ENCODE measurements at regions of chr1 and their contacts with region 1.

Region 1: GRCh38 chr1:222455188-222455879 is 92.6 kb downstream of the HHIPL2 start:
- DNase-seq: peak; percentile 97
- H3K4me3 Mint-ChIP-seq: peak overlapping the region; percentile 37
- H3K27ac Mint-ChIP-seq: peak overlapping the region; percentile 54
- H3K4me1 Mint-ChIP-seq: peaks cover 16% of the 10 kb centered on the region
- H3K27me3 Mint-ChIP-seq: no peaks in the 10 kb centered on the region
- CTCF ChIP-seq: peak; percentile 100

Region 2: GRCh38 chr1:221478050-221478949 is 977.0 kb before region 1 on chr1:
- CTCF ChIA-PET with region 1: interaction called, 163 read pairs
- POLR2A ChIA-PET with region 1: interaction called, 28 read pairs
- intact Hi-C with region 1: loop called (anchors 1 kb)
- DNase-seq: peak; percentile 96
- H3K4me3 Mint-ChIP-seq: no peak overlapping the region
- H3K27ac Mint-ChIP-seq: no peak overlapping the region
- H3K4me1 Mint-ChIP-seq: no peaks in the 10 kb centered on the region
- H3K27me3 Mint-ChIP-seq: no peaks in the 10 kb centered on the region
- CTCF ChIP-seq: peak; percentile 99

Region 3: DNA sequence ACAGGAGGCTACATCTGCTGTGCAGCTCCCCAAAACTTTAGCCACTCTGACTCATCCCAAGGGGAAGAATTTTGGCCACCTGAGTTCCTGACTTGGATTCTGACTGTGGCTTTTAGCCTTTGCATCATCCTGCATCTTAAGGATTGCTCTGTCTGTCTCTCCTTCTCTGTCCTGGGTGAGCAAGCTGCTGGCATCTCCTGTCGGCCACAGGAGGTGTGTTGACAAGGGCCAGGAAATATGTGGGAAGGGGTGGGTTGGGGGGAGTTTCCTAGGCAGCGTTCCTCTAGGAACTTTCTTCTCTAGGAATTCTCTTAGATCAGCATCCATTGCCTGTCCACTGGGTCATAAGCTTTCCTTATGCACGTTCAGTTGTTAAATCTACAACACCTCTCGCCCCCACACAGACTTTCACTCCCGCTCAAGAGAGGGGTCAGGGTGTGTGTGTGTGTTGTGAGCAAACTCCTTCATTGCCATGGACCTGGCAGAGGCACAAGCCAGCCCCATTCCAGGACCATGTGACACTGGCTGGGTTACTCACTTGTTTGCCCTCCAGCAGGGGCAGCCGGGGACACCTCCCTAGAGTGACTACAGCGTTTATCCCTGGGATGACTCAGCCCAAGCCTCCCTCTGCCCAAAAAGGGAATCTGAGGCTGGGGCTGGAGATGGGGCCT is 568.5 kb before region 1 on chr1:
- CTCF ChIA-PET with region 1: interaction called, 26 read pairs
- POLR2A ChIA-PET with region 1: interaction called, 13 read pairs
- intact Hi-C with region 1: loop called (anchors 2 kb)
- DNase-seq: peak; percentile 99
- H3K4me3 Mint-ChIP-seq: peak overlapping the region; percentile 55
- H3K27ac Mint-ChIP-seq: peak overlapping the region; percentile 85
- H3K4me1 Mint-ChIP-seq: peaks cover 60% of the 10 kb centered on the region
- H3K27me3 Mint-ChIP-seq: no peaks in the 10 kb centered on the region
- CTCF ChIP-seq: peak; percentile 11

Region 4: GRCh38 chr1:222124602-222125001 is 330.7 kb before region 1 on chr1:
- CTCF ChIA-PET with region 1: interaction called, 81 read pairs
- POLR2A ChIA-PET with region 1: interaction called, 4 read pairs
- intact Hi-C with region 1: loop called (anchors 1 kb)
- DNase-seq: peak; percentile 64
- H3K4me3 Mint-ChIP-seq: no peak overlapping the region
- H3K27ac Mint-ChIP-seq: no peak overlapping the region
- H3K4me1 Mint-ChIP-seq: no peaks in the 10 kb centered on the region
- H3K27me3 Mint-ChIP-seq: no peaks in the 10 kb centered on the region
- CTCF ChIP-seq: peak; percentile 58

Region 5: DNA sequence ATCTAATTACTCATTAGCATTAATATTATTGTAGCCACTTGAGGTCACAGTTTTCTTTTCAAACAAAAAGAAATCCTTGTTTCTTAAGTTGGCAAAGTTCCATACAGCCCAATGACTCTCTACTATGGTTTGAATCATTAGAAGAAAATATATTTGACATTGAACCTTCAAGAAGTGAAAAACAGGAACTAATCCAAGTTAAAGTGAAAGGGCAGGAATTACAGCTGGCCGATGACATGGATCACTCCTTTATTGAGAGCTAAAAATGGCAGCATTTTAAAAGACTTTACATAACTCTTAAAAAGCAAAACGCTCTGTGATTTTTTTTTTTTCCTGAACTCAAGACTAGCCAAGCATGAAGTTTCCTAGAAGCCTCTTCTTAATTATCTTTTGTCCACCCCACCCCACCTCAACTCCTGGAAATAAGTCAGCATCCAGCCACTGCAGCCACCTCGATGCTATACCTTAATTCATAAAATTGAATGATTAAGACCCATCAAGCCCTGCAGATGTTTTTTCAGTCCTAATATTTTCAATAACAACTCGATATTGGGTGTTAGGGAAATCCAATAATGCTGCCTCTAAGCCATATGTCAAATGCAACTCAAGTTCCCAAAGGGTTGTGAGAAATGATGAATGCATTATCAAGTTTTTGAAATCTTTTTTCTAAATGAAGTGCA is 230.6 kb before region 1 on chr1:
- CTCF ChIA-PET with region 1: interaction called, 17 read pairs
- POLR2A ChIA-PET with region 1: interaction called, 5 read pairs
- intact Hi-C with region 1: no loop called
- DNase-seq: no peak
- H3K4me3 Mint-ChIP-seq: no peak overlapping the region
- H3K27ac Mint-ChIP-seq: no peak overlapping the region
- H3K4me1 Mint-ChIP-seq: peaks cover 7% of the 10 kb centered on the region
- H3K27me3 Mint-ChIP-seq: no peaks in the 10 kb centered on the region
- CTCF ChIP-seq: no peak

Region 6: GRCh38 chr1:222420633-222421032 is 34.7 kb before region 1 on chr1:
- CTCF ChIA-PET with region 1: interaction called, 11 read pairs
- POLR2A ChIA-PET with region 1: no interaction called
- intact Hi-C with region 1: no loop called
- DNase-seq: no peak
- H3K4me3 Mint-ChIP-seq: no peak overlapping the region
- H3K27ac Mint-ChIP-seq: no peak overlapping the region
- H3K4me1 Mint-ChIP-seq: no peaks in the 10 kb centered on the region
- H3K27me3 Mint-ChIP-seq: no peaks in the 10 kb centered on the region
- CTCF ChIP-seq: no peak

Region 7: GRCh38 chr1:222521299-222522104 is 66.2 kb after region 1 on chr1:
- CTCF ChIA-PET with region 1: no interaction called
- POLR2A ChIA-PET with region 1: no interaction called
- intact Hi-C with region 1: no loop called
- DNase-seq: peak; percentile 93
- H3K4me3 Mint-ChIP-seq: no peak overlapping the region
- H3K27ac Mint-ChIP-seq: peak overlapping the region; percentile 25
- H3K4me1 Mint-ChIP-seq: peaks cover 20% of the 10 kb centered on the region
- H3K27me3 Mint-ChIP-seq: no peaks in the 10 kb centered on the region
- CTCF ChIP-seq: no peak

Measured in MCF 10A (cell line).